Naive thymus-derived CD8-positive, alpha-beta T cell (primary cell): ENCODE measurements at regions of chr21 and their contacts with region 1.

Region 1: DNA sequence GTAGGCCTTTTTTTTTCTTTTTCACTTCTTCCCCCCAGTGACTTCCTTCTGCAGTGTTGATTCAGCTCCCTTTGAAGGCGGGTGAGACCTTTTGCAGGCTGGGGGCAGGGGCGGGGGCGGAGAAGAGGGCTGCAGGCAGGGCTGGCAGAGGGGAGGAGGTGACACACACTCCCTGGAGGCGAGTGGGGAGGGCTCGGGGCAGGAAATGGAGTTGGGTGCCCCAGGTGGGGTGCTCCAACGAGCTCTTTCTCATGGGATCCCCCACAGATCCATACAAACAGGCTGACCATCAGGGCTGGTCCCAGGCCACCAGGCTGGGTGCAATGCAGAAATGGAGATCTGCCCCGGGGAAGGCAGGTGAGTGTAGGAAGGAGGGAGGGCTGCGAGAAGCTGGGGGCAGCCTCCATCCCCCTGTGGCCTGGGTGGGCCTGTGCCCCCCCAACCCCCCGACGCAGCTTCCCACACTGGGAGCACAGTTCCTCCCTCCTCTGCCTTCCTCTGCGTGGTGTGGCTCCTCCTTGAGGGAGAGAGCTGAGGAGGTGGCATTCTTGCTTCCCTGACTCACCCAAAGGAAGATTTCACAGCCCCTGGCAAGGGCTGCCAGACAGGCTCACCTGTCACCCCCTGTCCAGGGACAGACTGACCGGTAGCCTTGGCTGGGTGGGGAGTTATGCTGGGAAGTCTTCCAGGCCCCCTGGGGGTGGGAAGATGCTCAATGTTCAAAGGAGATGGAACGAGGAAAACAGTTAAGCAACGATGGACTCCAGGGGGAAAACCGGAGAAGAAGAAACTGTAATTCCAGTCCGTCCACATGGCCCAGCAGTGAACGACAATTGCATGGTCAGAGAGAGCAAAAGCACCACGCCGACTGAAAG is 7.1 kb upstream of the ITGB2 start:
- DNase-seq: peak; percentile 75 to 96 (median 84)
- ATAC-seq: peak; percentile 69 to 82
- H3K4me3 Mint-ChIP-seq: peak overlapping the region; percentile 88 to 96 (median 91)
- H3K27ac Mint-ChIP-seq: peak overlapping the region; percentile 70 to 99 (median 96)
- H3K4me1 Mint-ChIP-seq: peaks cover 50 to 83% (median 78%) of the 10 kb centered on the region in 4 donors
- H3K27me3 Mint-ChIP-seq: no peaks in the 10 kb centered on the region

Region 2: GRCh38 chr21:44801468-44802395 is 126.1 kb before region 1 on chr21 and contains the start of gene UBE2G2:
- POLR2A ChIA-PET with region 1: interaction called, 24 read pairs
- DNase-seq: peak; percentile 77 to 92 (median 88)
- ATAC-seq: peak; percentile 91 to 93
- H3K4me3 Mint-ChIP-seq: peak within 1 kb of the TSS; percentile 92 to 99 (median 97)
- H3K27ac Mint-ChIP-seq: peak within 1 kb of the TSS; percentile 64 to 99 (median 95)
- H3K4me1 Mint-ChIP-seq: peaks cover 23 to 53% (median 46%) of the 10 kb centered on the region in 4 donors
- H3K27me3 Mint-ChIP-seq: no peaks in the 10 kb centered on the region
- polyA plus RNA-seq, gene UBE2G2: 56.2 to 72.8 (median 62.3) TPM

Region 3: DNA sequence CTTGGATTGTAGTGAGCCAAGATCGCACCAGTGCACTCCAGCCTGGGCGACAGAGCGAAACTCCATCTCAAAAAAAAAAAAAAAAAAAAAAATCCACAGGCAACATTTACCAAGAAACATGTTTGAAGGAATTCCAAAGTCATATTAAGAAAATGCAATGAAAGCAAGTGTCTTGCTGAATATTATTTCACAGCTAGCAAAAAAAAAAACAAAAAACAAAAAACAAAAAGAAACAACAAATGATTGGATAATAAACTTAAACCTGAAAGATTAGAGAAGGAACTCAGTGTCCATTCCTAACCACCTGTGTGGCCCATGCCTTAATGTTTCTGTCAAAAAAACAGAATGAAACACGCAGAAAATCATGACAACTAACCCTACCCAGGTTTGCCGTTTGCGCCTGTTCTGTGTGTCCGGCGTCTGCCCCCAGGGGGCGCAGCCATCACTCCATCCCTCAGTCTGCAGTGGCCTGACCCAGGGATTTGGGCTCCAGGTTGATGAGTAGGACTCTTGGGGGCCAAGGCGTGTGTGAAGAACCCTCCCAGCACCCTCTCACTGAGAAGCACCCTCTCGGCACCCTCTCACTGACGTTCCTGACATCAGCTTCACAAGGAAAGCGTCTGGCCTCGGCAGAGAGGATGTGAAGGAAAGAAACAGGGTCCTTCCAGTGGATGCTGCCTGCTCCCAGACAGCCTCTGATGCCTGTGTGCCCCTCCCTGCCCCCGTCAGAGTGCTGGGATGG is 35.1 kb before region 1 on chr21:
- POLR2A ChIA-PET with region 1: interaction called, 238 read pairs
- DNase-seq: peak; percentile 61 to 81 (median 72)
- ATAC-seq: peak; percentile 87 to 90
- H3K4me3 Mint-ChIP-seq: peak overlapping the region in 1 of 10 donors; percentile 18
- H3K27ac Mint-ChIP-seq: peak overlapping the region; percentile 44 to 91 (median 79)
- H3K4me1 Mint-ChIP-seq: peaks cover 8 to 32% (median 22%) of the 10 kb centered on the region in 4 donors
- H3K27me3 Mint-ChIP-seq: no peaks in the 10 kb centered on the region

Region 4: GRCh38 chr21:44939532-44940115 is 11.8 kb after region 1 on chr21 and contains the start of gene SLX9:
- POLR2A ChIA-PET with region 1: interaction called, 13 read pairs
- DNase-seq: peak; percentile 66 to 83 (median 76)
- ATAC-seq: peak; percentile 93 to 94
- H3K4me3 Mint-ChIP-seq: peak within 1 kb of the TSS; percentile 82 to 93 (median 89)
- H3K27ac Mint-ChIP-seq: peak within 1 kb of the TSS; percentile 81 to 93 (median 88)
- H3K4me1 Mint-ChIP-seq: peaks cover 22 to 50% (median 41%) of the 10 kb centered on the region in 4 donors
- H3K27me3 Mint-ChIP-seq: no peaks in the 10 kb centered on the region
- polyA plus RNA-seq, gene SLX9: 11.7 to 13.5 (median 12.1) TPM

Region 5: GRCh38 chr21:44949779-44950198 is 22.0 kb after region 1 on chr21:
- POLR2A ChIA-PET with region 1: no interaction called
- DNase-seq: peak; percentile 64 to 91 (median 78)
- ATAC-seq: peak; percentile 92 to 97
- H3K4me3 Mint-ChIP-seq: peak overlapping the region in 2 of 10 donors; percentile 34 to 47
- H3K27ac Mint-ChIP-seq: peak overlapping the region in 1 of 10 donors; percentile 71
- H3K4me1 Mint-ChIP-seq: peaks cover 16 to 30% (median 26%) of the 10 kb centered on the region in 4 donors
- H3K27me3 Mint-ChIP-seq: no peaks in the 10 kb centered on the region

Region 6: DNA sequence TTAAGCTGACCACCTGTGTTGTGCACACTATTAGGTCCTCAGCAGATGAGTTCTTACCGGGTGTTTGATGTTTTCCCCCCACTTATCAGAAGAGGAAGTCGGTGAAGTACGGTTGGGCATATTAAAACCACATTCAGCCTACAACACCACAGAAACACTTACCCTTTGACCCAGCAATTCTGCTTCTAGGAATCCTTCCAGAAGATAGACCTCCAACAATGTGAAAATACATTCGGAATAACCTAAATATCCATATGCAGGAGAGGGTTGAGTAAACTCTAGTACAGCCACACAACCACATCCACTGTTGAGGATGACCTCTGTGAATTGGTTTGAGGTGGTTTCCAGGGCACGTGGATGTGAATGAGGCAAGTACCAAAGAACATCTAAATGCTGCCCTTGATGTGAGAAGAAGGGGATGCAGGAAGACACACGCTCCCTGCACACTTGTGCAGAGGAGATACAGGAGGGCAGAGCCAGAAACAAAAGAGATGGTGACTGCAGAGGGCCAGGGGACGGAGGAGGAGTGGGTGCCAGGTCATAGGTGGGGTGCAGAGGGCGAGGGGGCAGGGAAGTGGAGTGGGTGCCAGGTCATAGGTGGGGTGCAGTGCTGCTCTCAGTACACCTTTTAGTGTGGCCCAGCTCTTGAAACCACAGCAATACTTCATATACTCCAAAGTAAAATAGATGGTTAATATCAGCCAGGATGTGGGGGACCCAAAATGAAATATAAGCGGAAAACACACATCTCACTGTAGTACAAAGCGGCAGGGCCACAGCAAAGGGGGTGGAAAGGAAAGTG is 159.4 kb after region 1 on chr21:
- POLR2A ChIA-PET with region 1: no interaction called
- DNase-seq: peak in 2 of 10 donors; percentile 42
- ATAC-seq: peak; percentile 68 to 80
- H3K4me3 Mint-ChIP-seq: peak overlapping the region; percentile 36 to 88 (median 74)
- H3K27ac Mint-ChIP-seq: peak overlapping the region; percentile 17 to 86 (median 79)
- H3K4me1 Mint-ChIP-seq: peaks cover 47 to 95% (median 87%) of the 10 kb centered on the region in 4 donors
- H3K27me3 Mint-ChIP-seq: no peaks in the 10 kb centered on the region